GM23248 (cell line): ENCODE measurements at regions of chr13 and their contacts with region 1.

Region 1: DNA sequence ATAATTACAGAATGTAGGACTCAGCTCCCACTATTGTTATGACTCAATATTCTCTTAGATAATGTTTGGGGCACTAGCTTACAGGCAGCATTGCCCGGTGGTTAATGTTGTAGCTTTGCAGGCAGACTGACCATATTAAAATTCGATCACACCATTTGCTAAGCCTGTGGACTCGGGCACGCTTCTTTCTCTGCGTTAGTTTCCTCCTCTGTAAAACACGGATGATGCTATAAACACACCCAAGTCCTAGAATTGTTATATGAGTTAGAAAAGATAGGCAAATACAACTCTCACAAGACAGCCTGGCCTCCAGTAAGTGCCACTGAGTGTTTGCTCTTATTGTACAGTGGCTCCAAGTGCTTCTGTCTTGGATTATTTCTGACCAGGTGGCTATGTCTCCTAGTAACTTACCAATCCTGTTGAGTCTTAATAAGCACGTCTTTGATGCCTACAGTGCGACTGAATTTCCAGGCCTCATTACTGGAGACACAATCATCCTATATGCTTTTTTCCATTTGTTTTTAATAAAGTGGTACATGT is 50.0 kb upstream of the ALOX5AP start:
- DNase-seq: peak; percentile 17
- H3K4me3 ChIP-seq: no peak overlapping the region
- H3K27ac ChIP-seq: no peak overlapping the region
- H3K4me1 ChIP-seq: peaks cover 11% of the 10 kb centered on the region
- H3K27me3 ChIP-seq: no peaks in the 10 kb centered on the region

Region 2: GRCh38 chr13:30792285-30793000 is 107.1 kb after region 1 on chr13:
- in situ Hi-C with region 1: loop called (anchors 5 kb)
- DNase-seq: peak; percentile 98
- H3K4me3 ChIP-seq: peak overlapping the region; percentile 27; the same call in 1 of the 2 replicates
- H3K27ac ChIP-seq: peak overlapping the region; percentile 46
- H3K4me1 ChIP-seq: peaks cover 53% of the 10 kb centered on the region
- H3K27me3 ChIP-seq: no peaks in the 10 kb centered on the region